ENCODE measurements at regions of chr11 and their contacts with region 1.

Region 1: DNA sequence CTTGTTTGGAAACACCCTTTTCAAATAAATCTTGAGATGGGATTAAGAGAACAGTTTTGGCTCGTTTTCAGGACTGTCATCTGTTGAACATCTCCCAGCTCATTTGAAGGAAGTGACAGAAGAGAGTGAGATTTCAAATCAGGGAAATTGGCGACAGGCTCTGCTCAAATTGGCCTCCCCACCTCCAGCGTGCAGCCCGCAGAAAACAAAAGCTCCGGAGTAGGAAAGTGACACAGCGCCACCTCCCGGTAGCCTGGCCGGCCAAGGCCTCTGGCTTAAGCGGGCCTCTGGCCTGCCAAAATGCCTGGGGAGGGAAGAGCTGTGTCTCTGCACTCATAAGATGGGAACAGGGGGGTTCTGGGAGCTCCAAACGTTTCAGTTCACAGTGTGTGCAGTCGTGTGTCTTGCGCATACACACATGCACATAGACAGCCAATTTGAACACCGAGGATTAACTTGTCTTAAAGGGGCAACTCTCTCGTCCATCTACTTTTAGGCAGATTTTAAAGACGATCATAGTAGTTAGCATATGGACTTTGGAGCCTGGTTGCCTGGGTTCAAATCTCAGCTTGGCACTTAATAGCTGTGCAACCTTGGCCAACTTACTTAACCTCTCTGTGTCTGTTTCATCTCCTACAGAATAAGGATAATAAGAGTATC is 132.7 kb upstream of the RCN1 start:
- DNase-seq: peak; percentile 33 to 87
- H3K4me3 ChIP-seq: no peak overlapping the region
- H3K4me1 ChIP-seq: no peaks in the 10 kb centered on the region
- H3K27me3 ChIP-seq: no peaks in the 10 kb centered on the region

Region 2: DNA sequence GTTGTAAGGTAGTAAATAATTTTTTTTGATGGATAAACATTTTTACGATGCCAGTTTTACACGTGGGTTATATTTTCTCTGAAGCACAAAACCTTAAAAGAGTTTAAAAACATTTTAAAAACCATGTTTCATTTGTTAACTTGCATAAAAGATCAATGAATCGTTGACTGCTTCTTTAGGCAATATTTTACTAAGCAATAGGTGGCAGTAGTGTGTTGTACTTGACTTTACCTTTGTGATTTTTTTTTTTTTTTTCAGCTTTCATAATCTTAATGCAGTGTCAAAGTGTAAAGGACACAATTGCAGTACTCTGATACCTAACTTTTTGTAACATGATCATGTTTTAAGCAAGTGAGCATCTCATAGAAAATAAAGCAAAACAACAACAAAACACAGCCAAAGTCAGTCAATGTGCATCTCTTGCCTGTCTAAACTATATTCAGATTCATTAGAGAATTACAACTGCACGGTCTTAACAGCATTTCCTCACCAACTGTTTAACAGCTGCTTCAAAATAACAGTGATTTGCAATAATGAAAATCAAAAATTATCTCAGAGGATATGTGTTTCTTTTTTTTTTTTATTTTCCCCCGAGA is 560.9 kb before region 1 on chr11:
- in situ Hi-C with region 1: loop called (anchors 10 kb)
- DNase-seq: peak in 1 of 2 experiments; percentile 19
- H3K4me3 ChIP-seq: no peak overlapping the region
- H3K4me1 ChIP-seq: no peaks in the 10 kb centered on the region
- H3K27me3 ChIP-seq: no peaks in the 10 kb centered on the region

Region 3: GRCh38 chr11:31764766-31765165 is 193.4 kb before region 1 on chr11:
- in situ Hi-C with region 1: no loop called
- DNase-seq: peak; percentile 36 to 44
- H3K4me3 ChIP-seq: no peak overlapping the region
- H3K4me1 ChIP-seq: peaks cover 11% of the 10 kb centered on the region
- H3K27me3 ChIP-seq: no peaks in the 10 kb centered on the region

Region 4: GRCh38 chr11:32266601-32267000 is 308.4 kb after region 1 on chr11:
- in situ Hi-C with region 1: no loop called
- DNase-seq: no peak
- H3K4me3 ChIP-seq: no peak overlapping the region
- H3K4me1 ChIP-seq: no peaks in the 10 kb centered on the region
- H3K27me3 ChIP-seq: no peaks in the 10 kb centered on the region

Region 5: DNA sequence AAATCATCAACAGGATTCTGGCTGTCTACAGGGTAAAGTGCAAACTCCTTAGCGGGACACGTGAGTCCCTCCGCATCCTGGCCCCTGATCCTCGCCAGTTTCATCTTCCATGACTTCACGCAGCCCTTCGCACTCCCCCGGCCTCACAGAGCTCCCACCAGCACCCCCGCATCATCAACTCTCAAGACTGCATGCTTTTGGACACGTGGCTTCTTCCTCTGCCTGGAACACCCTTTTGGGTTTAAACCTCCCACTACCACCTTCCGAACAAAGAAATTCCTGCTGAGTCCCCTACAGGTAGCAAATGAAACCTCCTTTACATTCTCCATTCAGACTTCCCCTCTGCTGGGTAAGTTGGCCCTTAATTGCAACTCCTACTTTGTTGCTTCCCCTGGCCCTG is 612.8 kb after region 1 on chr11:
- in situ Hi-C with region 1: no loop called
- DNase-seq: no peak
- H3K4me3 ChIP-seq: no peak overlapping the region
- H3K4me1 ChIP-seq: no peaks in the 10 kb centered on the region
- H3K27me3 ChIP-seq: no peaks in the 10 kb centered on the region

Measured in HAP-1 (cell line).